A549 (cell line): ENCODE measurements at regions of chr16 and their contacts with region 1.

Region 1: GRCh38 chr16:67660564-67661028 is at the start of gene PARD6A:
- DNase-seq: peak; percentile 96 to 99
- ATAC-seq: peak; percentile 66 to 81
- H3K4me3 ChIP-seq: peak within 1 kb of the TSS; percentile 91
- H3K27ac ChIP-seq: peak within 1 kb of the TSS; percentile 90 to 92
- H3K4me1 ChIP-seq: peaks cover 8% of the 10 kb centered on the region
- CTCF ChIP-seq: no peak
- EP300 ChIP-seq: no peak
- POLR2A ChIP-seq: no peak
- RAD21 ChIP-seq: no peak
- polyA plus RNA-seq, gene PARD6A: 1.7 and 1.8 TPM in 2 replicates

Region 2: GRCh38 chr16:67356396-67356795 is 304.2 kb before region 1 on chr16:
- CTCF ChIA-PET with region 1: no interaction called
- POLR2A ChIA-PET with region 1: no interaction called
- DNase-seq: no peak
- ATAC-seq: no peak
- H3K4me3 ChIP-seq: no peak overlapping the region
- H3K27ac ChIP-seq: no peak overlapping the region
- H3K4me1 ChIP-seq: no peaks in the 10 kb centered on the region
- CTCF ChIP-seq: no peak
- EP300 ChIP-seq: no peak
- POLR2A ChIP-seq: no peak
- RAD21 ChIP-seq: no peak

Region 3: GRCh38 chr16:67499106-67499505 is 161.5 kb before region 1 on chr16:
- CTCF ChIA-PET with region 1: interaction called, 14 read pairs
- POLR2A ChIA-PET with region 1: no interaction called
- DNase-seq: no peak
- ATAC-seq: no peak
- H3K4me3 ChIP-seq: no peak overlapping the region
- H3K27ac ChIP-seq: no peak overlapping the region
- H3K4me1 ChIP-seq: peaks cover under 1% of the 10 kb centered on the region; the same call in 1 of the 3 replicates
- CTCF ChIP-seq: no peak
- EP300 ChIP-seq: no peak
- POLR2A ChIP-seq: no peak
- RAD21 ChIP-seq: no peak

Region 4: DNA sequence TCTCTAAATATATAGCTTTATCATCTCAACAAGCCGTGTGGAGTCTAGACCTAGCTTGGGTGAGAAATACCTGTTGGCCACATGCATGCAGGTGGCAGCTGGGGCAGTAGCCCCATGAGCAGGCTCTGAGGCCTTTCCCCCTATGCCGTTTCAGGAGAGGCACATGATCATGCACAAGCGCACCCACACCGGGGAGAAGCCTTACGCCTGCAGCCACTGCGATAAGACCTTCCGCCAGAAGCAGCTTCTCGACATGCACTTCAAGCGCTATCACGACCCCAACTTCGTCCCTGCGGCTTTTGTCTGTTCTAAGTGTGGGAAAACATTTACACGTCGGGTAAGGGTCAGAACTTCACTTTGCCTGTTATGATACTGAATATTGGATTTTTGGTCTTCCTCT is 32.4 kb before region 1 on chr16:
- CTCF ChIA-PET with region 1: no interaction called
- POLR2A ChIA-PET with region 1: no interaction called
- DNase-seq: no peak
- ATAC-seq: no peak
- H3K4me3 ChIP-seq: no peak overlapping the region
- H3K27ac ChIP-seq: no peak overlapping the region
- H3K4me1 ChIP-seq: no peaks in the 10 kb centered on the region
- CTCF ChIP-seq: no peak
- EP300 ChIP-seq: no peak
- POLR2A ChIP-seq: no peak
- RAD21 ChIP-seq: no peak

Region 5: GRCh38 chr16:67647111-67647651 is 13.4 kb before region 1 on chr16:
- CTCF ChIA-PET with region 1: interaction called, 51 read pairs
- POLR2A ChIA-PET with region 1: interaction called, 4 read pairs
- DNase-seq: no peak
- ATAC-seq: no peak
- H3K4me3 ChIP-seq: no peak overlapping the region
- H3K27ac ChIP-seq: no peak overlapping the region
- H3K4me1 ChIP-seq: 0 out of 3 replicates have a peak, but pooled peaks cover 3% of the 10 kb centered on the region
- CTCF ChIP-seq: no peak
- EP300 ChIP-seq: no peak
- POLR2A ChIP-seq: no peak
- RAD21 ChIP-seq: no peak

Region 6: DNA sequence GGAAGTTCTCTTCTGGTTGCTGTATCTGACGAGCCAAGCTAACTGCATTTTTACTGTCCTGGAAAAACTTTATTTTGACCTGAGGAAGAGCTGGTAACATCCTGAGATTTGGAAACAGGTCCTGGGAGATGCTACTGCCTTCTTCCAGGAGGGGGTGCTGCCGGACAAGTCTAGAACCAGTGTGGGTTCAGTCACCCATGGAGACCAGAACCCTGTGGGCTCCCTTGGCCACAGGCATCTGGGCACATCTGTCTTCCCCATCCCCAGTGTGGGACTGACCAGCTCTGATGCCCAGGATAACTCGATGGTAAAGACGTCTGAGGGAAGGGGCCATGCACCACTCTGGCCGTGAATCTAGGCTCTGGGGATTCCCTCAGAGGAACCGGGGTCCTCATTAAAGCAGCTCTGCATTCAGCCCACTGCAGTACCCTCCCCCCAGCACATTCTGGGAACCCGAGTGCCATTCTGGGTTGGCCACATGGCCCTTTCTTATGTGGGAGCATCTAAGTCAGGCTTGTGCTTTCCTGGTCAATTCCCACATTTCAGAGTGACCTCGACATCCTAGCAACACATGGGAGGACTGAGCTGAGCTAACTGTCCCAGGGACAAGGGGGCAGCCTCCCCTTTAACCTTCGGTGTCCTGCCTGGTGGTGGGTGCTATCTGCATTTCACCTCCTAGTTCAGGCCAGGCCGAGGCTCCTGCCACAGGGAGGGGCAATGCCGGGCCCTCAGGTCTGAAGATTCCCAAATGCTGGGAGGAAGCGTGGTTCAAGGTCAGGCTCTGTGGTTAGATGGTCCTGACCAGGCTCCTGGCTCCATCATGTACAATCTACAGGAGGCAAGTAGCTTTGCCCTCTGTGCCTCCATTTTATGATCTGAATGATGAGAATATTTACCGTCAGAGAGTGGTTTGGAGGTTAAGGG is 12.4 kb after region 1 on chr16:
- CTCF ChIA-PET with region 1: interaction called, 18 read pairs
- POLR2A ChIA-PET with region 1: no interaction called
- DNase-seq: peak; percentile 58 to 84
- ATAC-seq: peak; percentile 57 to 65
- H3K4me3 ChIP-seq: no peak overlapping the region
- H3K27ac ChIP-seq: no peak overlapping the region
- H3K4me1 ChIP-seq: peaks cover 3% of the 10 kb centered on the region; the same call in 1 of the 3 replicates
- CTCF ChIP-seq: peak; percentile 64
- EP300 ChIP-seq: no peak
- POLR2A ChIP-seq: no peak
- RAD21 ChIP-seq: peak; percentile 73 to 83